Caco-2 (cell line): ENCODE measurements at regions of chr13 and their contacts with region 1.

Region 1: DNA sequence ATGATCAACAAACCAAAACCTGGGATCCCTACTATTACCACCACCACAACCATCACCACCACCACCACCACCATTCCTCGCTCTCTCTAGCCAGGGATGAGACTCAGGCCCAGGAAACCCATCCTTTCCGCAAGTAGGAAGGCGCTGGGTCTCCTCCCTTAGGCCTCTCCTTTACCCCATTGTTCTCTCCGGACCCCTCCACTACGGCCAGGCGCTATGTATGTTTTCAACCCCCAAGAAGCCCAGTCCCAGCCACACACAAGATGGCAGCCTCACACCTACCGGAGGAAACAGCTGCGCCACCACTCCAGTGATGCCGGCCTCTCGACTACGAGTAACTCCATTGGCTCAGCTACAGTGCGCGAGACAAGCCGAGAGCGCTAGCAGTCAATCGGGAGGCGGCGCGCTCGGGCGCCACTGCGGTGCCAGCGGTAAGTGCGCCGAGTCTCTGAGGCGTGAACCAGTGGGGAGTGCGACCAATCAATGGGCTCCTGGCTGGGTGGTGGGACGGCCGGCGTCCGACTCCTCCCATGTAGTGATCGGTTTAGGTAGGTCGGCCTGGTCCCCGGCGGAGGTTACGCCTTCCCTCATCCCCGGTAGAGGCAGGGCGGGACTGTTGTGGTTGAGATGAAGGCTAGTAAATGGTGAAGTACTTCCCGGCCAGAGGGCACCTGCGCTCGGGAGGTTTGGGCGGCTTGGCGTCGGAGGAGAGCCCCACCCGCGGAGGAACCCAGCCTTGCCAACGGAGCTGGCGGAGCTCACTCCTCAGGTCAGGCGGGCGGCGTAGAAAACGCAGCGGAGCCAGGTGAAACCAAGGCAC is at the starts of genes CAB39L and SETDB2:
- DNase-seq: peak; percentile 99 to 100
- H3K4me3 ChIP-seq: peak within 1 kb of the TSS; percentile 60
- H3K4me3 Mint-ChIP-seq: peak within 1 kb of the TSS; percentile 87
- H3K27ac Mint-ChIP-seq: peak within 1 kb of the TSS; percentile 90
- H3K4me1 ChIP-seq: no peaks in the 10 kb centered on the region; the same call in 1 of the 2 replicates
- H3K4me1 Mint-ChIP-seq: peaks cover 6% of the 10 kb centered on the region
- H3K27me3 ChIP-seq: no peaks in the 10 kb centered on the region
- H3K27me3 Mint-ChIP-seq: no peaks in the 10 kb centered on the region
- CTCF ChIP-seq: peak; percentile 22 to 39
- total RNA-seq, gene CAB39L: 40.6 and 48.6 TPM in 2 replicates
- total RNA-seq, gene SETDB2: 14.7 and 15.5 TPM in 2 replicates

Region 2: DNA sequence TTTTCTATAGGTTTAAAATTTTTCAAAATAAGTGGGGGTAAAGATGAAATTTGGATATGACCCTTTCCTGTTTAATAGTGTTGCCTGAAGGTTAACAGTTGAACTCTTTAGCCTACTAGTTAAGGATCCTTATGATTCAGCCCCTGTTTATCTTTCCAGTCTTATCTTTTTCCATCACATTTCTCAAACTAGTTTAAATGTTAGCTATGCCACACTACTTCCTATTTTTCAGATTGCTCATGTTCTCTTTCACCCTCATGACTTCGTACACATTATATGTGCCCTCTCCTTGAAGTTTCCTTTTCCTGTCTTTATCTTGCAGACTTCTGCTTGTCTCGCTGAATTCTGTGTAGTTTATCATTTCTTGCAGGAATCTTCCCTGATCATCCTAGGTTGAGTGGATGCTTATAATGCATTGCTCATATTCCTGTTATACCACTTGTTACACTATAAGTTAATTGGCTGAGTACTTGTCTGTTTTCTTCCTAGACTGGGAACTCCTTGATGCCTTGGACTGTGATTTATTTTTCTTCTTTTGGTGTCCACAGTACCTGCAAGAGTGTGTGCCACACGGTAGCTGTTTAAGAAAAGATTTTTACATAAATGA is 381.5 kb before region 1 on chr13:
- CTCF ChIA-PET with region 1: no interaction called
- POLR2A ChIA-PET with region 1: no interaction called
- intact Hi-C with region 1: no loop called
- DNase-seq: no peak
- H3K4me3 ChIP-seq: no peak overlapping the region
- H3K4me3 Mint-ChIP-seq: no peak overlapping the region
- H3K27ac Mint-ChIP-seq: no peak overlapping the region
- H3K4me1 ChIP-seq: peaks cover 16% of the 10 kb centered on the region
- H3K4me1 Mint-ChIP-seq: peaks cover 7% of the 10 kb centered on the region
- H3K27me3 ChIP-seq: no peaks in the 10 kb centered on the region
- H3K27me3 Mint-ChIP-seq: no peaks in the 10 kb centered on the region
- CTCF ChIP-seq: no peak

Region 3: DNA sequence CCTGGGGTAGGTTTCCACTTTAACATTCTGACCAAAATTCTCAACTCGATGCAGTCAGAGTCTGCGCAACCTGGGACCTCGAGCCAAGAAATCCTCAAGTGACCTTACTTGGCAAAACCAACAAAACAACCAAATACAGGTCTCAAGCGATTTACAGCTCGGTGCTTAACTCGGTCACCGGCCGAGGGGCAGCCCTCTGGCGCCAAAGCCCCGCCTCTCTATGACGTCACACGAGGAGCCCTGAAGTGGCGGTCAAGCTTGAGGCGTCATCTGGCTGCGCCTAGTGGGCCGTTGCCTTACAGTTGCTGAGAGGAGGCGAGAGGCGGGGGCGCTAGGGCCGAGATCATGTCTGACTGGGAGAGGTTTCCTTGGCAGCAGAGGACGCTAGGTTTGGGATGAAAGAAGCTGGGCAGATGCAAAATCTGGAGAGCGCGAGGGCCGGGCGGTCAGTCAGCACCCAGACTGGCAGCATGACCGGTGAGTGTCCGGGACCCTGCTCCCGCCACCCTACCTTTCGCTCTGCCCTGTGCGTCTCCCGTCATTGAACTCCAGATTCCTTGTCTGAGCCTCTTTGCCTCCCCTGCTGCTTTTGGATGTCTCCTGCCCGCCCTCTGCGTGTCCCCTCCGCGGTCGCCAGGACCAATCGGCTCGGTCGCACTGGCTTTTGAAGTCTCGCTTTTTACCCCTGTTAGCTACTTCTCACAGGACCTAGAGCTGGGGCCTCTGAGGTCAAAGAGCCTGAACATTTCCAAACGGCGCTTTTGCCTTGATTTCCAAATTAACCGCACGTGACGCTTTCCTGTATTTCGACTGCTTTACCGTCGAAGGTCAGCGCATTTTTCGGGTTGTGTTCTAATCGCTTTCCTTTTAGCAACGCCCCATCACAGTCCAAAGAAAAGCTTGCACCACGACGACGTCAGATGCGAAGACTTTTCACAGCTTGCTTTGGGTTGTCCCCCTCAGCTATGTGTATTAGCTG is 196.0 kb before region 1 on chr13 and contains the start of gene CDADC1:
- CTCF ChIA-PET with region 1: interaction called, 4 read pairs
- POLR2A ChIA-PET with region 1: interaction called, 10 read pairs
- intact Hi-C with region 1: no loop called
- DNase-seq: peak; percentile 98
- H3K4me3 ChIP-seq: peak within 1 kb of the TSS; percentile 97
- H3K4me3 Mint-ChIP-seq: peak within 1 kb of the TSS; percentile 89
- H3K27ac Mint-ChIP-seq: peak within 1 kb of the TSS; percentile 88
- H3K4me1 ChIP-seq: peaks cover 4% of the 10 kb centered on the region; the same call in 1 of the 2 replicates
- H3K4me1 Mint-ChIP-seq: no peaks in the 10 kb centered on the region
- H3K27me3 ChIP-seq: no peaks in the 10 kb centered on the region
- H3K27me3 Mint-ChIP-seq: peaks cover 2% of the 10 kb centered on the region
- CTCF ChIP-seq: no peak
- total RNA-seq, gene CDADC1: 14.4 and 15.9 TPM in 2 replicates

Region 4: DNA sequence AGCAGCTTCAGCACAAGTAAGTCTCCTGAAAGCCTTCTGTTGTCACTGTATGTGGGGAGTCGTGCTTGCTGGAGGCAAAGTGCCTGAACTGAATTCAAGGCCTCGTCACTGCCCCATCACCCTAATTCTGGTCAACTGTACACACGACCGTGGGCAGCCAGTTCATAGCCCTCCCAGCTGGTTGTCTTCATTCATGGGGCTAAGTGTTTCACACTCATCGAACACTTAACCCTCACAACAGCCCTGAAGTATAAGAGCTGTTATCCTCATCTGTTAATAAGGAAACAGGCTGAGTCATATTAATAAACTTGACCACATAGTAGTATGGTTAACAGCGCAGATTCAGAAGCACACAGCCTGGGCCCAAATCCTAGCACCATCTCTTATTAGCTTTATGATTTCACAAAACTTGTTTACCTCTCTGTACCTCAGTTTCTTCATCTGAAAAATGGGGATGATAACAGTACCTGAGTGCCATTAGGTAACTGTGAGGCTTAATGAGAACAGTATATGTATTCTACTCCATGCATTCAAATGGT is 129.5 kb before region 1 on chr13:
- CTCF ChIA-PET with region 1: interaction called, 12 read pairs
- POLR2A ChIA-PET with region 1: interaction called, 4 read pairs
- intact Hi-C with region 1: no loop called
- DNase-seq: no peak
- H3K4me3 ChIP-seq: no peak overlapping the region
- H3K4me3 Mint-ChIP-seq: peak overlapping the region; percentile 20
- H3K27ac Mint-ChIP-seq: peak overlapping the region; percentile 60
- H3K4me1 ChIP-seq: peaks cover 21% of the 10 kb centered on the region
- H3K4me1 Mint-ChIP-seq: peaks cover 26% of the 10 kb centered on the region
- H3K27me3 ChIP-seq: no peaks in the 10 kb centered on the region
- H3K27me3 Mint-ChIP-seq: no peaks in the 10 kb centered on the region
- CTCF ChIP-seq: no peak

Region 5: DNA sequence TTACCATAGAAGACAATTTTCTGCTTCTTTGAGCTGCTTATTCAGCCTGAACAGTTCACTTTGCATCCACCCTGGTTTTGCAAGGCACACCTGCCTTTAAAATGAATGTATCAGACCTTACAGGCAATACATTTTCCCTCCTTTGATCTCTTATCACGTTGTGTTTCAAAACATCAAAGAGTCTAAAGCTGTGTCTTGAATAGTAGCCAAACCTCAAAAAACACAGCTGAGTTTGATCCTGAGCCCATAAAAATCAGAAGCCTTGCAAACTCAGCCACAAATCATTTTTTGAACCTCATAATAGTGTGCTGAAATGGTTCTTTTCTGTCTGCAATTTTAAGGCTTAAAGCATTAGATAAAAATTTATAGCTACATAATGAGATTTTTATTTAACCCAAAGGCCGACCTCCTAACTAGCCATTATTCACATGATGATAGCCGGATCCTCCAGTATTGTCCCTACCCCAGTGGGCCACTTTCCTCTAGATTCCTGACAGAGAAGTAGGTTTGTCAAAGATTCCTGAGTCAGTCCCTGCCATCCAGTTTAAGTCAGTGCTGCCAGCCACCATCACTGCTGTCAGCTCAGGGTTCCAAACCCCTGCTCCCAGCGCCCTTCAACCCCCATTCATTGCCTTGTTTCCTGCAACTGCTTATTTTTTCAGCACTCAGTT is 71.8 kb before region 1 on chr13:
- CTCF ChIA-PET with region 1: no interaction called
- POLR2A ChIA-PET with region 1: interaction called, 3 read pairs
- intact Hi-C with region 1: loop called (anchors 2 kb)
- DNase-seq: peak; percentile 68 to 74
- H3K4me3 ChIP-seq: no peak overlapping the region
- H3K4me3 Mint-ChIP-seq: peak overlapping the region; percentile 1
- H3K27ac Mint-ChIP-seq: peak overlapping the region; percentile 71
- H3K4me1 ChIP-seq: peaks cover 83% of the 10 kb centered on the region
- H3K4me1 Mint-ChIP-seq: peaks cover 47% of the 10 kb centered on the region
- H3K27me3 ChIP-seq: no peaks in the 10 kb centered on the region
- H3K27me3 Mint-ChIP-seq: no peaks in the 10 kb centered on the region
- CTCF ChIP-seq: no peak

Region 6: DNA sequence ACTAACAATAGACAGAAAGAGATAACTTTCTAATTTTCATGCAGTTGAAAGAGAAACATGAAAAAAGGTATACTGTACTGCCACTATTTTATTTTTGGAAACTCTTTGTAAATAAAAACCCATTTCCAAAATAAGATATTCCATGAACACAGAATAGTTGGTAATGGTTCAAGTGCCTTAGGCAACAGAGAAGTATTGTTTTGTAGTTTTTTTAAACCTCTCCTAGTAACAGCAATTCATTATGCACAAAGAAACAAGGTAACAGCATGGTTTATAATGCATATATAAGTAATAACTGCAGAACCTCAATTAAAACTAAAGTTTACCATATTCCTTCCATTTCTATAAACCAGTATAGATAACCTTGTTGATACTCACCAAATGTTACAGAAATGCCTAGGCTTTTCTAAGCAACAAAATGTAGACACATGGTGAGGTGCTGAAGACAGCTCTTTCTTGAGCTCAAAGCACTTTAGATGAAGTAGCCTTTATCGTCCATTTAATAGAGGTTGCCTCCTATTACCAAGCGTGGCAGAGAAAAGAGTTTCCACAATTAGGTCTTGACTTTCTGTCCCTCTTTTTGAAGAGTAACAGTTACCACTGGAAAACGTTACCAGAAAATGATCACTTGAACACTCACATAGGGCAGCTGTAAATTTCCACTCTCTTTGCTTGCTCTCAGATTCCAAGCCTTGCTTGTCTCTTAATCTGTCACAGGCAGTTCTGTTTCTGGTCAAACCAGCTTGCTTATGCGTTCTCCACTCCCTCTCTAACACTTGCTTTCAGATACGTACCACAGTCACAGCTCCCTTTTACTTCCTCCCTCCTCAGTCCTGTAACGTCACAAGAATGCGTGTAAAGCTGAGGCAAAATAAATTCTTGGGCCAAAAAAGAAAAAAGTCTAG is 42.9 kb before region 1 on chr13:
- CTCF ChIA-PET with region 1: no interaction called
- POLR2A ChIA-PET with region 1: interaction called, 6 read pairs
- intact Hi-C with region 1: loop called (anchors 2 kb)
- DNase-seq: peak; percentile 67 to 74
- H3K4me3 ChIP-seq: peak overlapping the region; percentile 33
- H3K4me3 Mint-ChIP-seq: peak overlapping the region; percentile 72
- H3K27ac Mint-ChIP-seq: peak overlapping the region; percentile 58
- H3K4me1 ChIP-seq: peaks cover 30% of the 10 kb centered on the region
- H3K4me1 Mint-ChIP-seq: peaks cover 6% of the 10 kb centered on the region
- H3K27me3 ChIP-seq: no peaks in the 10 kb centered on the region
- H3K27me3 Mint-ChIP-seq: no peaks in the 10 kb centered on the region
- CTCF ChIP-seq: no peak

Region 7: GRCh38 chr13:49464621-49465325 is 20.9 kb after region 1 on chr13:
- CTCF ChIA-PET with region 1: no interaction called
- POLR2A ChIA-PET with region 1: no interaction called
- intact Hi-C with region 1: no loop called
- DNase-seq: no peak
- H3K4me3 ChIP-seq: no peak overlapping the region
- H3K4me3 Mint-ChIP-seq: no peak overlapping the region
- H3K27ac Mint-ChIP-seq: no peak overlapping the region
- H3K4me1 ChIP-seq: no peaks in the 10 kb centered on the region
- H3K4me1 Mint-ChIP-seq: peaks cover 6% of the 10 kb centered on the region
- H3K27me3 ChIP-seq: no peaks in the 10 kb centered on the region
- H3K27me3 Mint-ChIP-seq: no peaks in the 10 kb centered on the region
- CTCF ChIP-seq: no peak

Region 8: DNA sequence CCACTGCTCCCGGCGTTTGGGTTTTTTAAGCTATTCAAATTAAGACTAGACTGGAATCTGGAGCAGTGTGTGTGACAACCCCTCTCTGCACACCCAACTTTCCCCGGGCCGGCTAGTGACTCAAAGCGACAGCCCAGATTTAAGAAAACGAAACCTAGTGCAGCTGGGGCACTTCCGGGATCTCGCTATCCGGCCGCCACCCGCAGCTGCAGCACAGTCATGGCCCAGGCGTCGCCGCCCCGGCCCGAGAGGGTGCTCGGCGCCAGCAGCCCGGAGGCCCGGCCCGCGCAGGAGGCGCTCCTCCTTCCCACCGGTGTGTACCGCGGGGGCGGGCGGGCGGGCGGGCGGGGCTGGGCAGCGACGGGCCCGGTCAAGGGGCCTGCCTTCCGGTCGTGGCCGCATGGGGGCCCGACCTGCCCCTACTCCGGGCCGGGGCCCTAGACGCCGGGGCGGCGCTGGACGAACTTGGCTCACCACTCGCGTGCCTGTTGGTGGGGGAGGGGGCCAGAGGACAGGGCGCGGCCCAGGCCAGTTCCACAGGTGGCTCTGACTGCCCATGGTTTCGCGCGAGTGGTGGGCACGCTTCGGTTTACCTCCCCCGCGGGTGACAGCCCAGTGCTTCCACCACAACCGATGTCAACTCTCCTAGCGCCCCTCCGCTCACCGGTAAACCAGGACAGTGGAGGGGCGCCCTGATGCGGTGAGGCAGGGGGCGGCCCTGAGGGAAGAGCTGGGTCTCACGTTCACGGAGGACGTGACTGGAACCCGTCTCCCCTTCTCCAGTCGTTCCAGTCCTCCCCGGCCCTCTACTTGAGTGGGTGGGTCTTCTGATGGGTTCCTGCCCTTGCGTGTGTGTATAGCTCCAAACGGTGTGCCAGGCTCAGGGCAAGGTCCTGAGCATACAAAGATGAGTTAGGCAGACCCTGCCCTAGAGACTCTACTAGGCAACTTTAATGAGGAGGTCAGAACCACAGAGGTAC is 52.2 kb after region 1 on chr13 and contains the start of gene PHF11:
- CTCF ChIA-PET with region 1: no interaction called
- POLR2A ChIA-PET with region 1: no interaction called
- intact Hi-C with region 1: no loop called
- DNase-seq: peak; percentile 29 to 37
- H3K4me3 ChIP-seq: peak within 1 kb of the TSS; percentile 13; the same call in 1 of the 2 replicates
- H3K4me3 Mint-ChIP-seq: peak within 1 kb of the TSS; percentile 51
- H3K27ac Mint-ChIP-seq: no peak within 1 kb of the TSS
- H3K4me1 ChIP-seq: no peaks in the 10 kb centered on the region
- H3K4me1 Mint-ChIP-seq: no peaks in the 10 kb centered on the region
- H3K27me3 ChIP-seq: no peaks in the 10 kb centered on the region
- H3K27me3 Mint-ChIP-seq: no peaks in the 10 kb centered on the region
- CTCF ChIP-seq: no peak
- total RNA-seq, gene PHF11: 1.8 and 2.3 TPM in 2 replicates

Region 9: DNA sequence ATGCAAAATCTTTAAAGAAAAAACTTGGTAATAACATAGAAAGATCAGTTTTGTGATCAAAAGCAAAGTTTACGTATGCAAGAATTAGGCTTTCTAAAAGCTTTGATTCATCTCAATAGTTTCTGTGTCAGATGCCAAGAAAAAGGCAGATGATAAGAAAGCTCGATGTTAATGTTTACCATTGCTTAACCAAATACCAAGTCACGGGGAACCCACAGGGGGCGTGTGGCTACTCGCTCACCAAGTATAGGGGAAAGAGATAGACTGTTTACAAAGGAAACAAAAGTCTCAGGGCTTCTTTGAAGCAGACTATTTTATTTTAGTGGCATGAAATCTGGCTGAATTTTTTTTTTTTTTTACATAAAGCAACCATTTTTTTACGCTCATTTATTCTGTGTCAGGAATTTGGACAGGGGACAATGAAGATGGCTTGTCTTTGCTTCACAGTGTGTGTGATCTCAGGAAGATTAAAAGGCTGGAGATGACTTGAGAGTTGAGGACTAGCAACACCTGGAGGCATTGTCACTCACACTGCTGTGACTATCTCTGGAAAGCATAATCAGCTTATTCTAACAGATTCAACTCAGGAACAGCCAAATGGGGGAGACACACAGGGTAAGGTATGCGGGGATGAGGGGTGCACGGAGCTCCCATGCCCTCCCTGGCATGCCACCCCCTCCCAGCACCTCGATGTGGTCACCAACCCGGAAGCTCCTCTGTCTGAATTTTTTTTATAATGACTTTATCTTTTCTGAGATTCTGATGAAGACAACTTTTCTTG is 116.5 kb after region 1 on chr13:
- CTCF ChIA-PET with region 1: interaction called, 10 read pairs
- POLR2A ChIA-PET with region 1: no interaction called
- intact Hi-C with region 1: no loop called
- DNase-seq: peak; percentile 76 to 79
- H3K4me3 ChIP-seq: no peak overlapping the region
- H3K4me3 Mint-ChIP-seq: peak overlapping the region; percentile 45
- H3K27ac Mint-ChIP-seq: peak overlapping the region; percentile 74
- H3K4me1 ChIP-seq: peaks cover 11% of the 10 kb centered on the region
- H3K4me1 Mint-ChIP-seq: peaks cover 21% of the 10 kb centered on the region
- H3K27me3 ChIP-seq: no peaks in the 10 kb centered on the region
- H3K27me3 Mint-ChIP-seq: no peaks in the 10 kb centered on the region
- CTCF ChIP-seq: peak; percentile 62 to 71

Region 10: GRCh38 chr13:49585220-49586157 is 141.6 kb after region 1 on chr13 and contains the start of gene RCBTB1:
- CTCF ChIA-PET with region 1: no interaction called
- POLR2A ChIA-PET with region 1: interaction called, 4 read pairs
- intact Hi-C with region 1: loop called (anchors 5 kb)
- DNase-seq: peak; percentile 73 to 76
- H3K4me3 ChIP-seq: peak within 1 kb of the TSS; percentile 97
- H3K4me3 Mint-ChIP-seq: peak within 1 kb of the TSS; percentile 84
- H3K27ac Mint-ChIP-seq: peak within 1 kb of the TSS; percentile 84
- H3K4me1 ChIP-seq: peaks cover 19% of the 10 kb centered on the region
- H3K4me1 Mint-ChIP-seq: peaks cover 16% of the 10 kb centered on the region
- H3K27me3 ChIP-seq: no peaks in the 10 kb centered on the region
- H3K27me3 Mint-ChIP-seq: no peaks in the 10 kb centered on the region
- CTCF ChIP-seq: no peak
- total RNA-seq, gene RCBTB1: 23.0 and 25.7 TPM in 2 replicates